Activated naive CD4-positive, alpha-beta T cell treated with anti-CD3 and anti-CD28 coated beads for 36 hours (primary cell): ENCODE measurements at regions of chr21 and their contacts with region 1.

Region 1: DNA sequence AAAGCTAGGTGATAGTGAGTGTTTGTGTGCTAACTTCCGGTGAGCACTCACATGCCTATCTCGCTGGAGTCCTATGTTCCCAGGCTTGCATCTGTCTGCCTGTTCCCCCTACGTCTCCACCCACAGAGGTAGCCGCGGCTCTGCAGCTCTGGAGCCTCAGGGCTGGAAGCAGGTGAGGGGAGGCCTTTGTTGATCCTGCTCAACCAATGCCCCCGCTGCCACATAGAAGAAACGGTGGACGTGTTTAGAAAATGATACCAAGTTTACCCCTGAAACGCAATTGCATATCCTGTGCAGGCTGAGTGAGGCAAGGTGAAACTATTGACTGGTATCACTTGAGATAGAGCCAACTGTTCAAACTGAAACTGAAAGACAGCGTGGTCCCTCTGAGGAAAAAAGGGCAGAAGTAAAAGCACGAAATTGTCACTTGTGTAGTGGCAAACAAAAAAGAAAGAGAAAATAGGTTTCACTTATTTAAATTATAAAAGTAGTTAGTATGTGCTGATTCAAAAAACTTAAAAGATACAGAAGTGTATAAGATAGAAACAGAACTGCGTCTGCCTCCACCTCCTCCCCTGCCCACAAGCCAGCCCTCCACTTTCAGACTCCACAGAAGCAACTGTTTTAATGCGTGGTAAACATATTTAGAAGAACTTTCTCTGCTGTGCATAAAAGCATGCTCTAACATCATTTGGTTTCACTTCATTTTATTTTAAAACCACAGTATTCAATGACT is 38.6 kb upstream of the ETS2 start:
- DNase-seq: peak; percentile 83
- H3K4me3 Mint-ChIP-seq: peak overlapping the region; percentile 51
- H3K27ac Mint-ChIP-seq: peak overlapping the region; percentile 82
- H3K4me1 Mint-ChIP-seq: peaks cover 42% of the 10 kb centered on the region
- H3K27me3 Mint-ChIP-seq: no peaks in the 10 kb centered on the region

Region 2: DNA sequence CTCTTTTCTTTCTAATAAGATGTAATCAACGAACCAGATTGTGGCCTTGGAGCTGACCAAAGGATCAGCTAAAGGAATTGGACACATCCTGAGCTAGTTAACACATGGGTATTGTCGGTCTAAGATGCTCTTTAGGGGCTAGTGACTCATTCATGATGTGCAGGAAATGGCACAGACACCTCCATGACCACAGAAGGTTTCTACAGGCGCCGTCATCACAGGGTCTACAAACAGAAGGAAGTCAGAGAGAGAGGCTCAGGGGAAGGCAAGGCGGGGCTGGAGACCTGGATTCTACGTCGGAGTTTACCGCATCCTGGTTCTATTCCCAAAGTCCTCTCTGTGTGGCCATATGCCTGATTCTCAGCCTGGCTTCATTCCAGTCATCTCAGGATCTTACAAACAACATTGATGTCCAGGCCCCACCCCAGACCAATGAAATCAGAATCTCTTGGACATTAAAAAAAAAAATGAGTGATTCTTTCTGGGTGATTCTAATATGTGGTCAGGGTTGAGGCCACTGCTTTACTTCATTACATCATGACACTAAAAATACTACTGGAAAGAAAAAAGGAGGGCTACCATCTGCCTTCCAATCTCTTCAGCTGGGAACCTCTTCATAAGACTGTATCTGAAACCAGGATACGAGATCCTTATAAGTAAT is 522.1 kb before region 1 on chr21:
- CTCF ChIA-PET with region 1: no interaction called
- intact Hi-C with region 1: loop called (anchors 2 kb)
- DNase-seq: peak; percentile 89
- H3K4me3 Mint-ChIP-seq: peak overlapping the region; percentile 10
- H3K27ac Mint-ChIP-seq: peak overlapping the region; percentile 87
- H3K4me1 Mint-ChIP-seq: peaks cover 41% of the 10 kb centered on the region
- H3K27me3 Mint-ChIP-seq: no peaks in the 10 kb centered on the region

Region 3: GRCh38 chr21:38780879-38781278 is 13.7 kb after region 1 on chr21:
- CTCF ChIA-PET with region 1: interaction called, 3 read pairs
- intact Hi-C with region 1: loop called (anchors 1 kb)
- DNase-seq: peak; percentile 33
- H3K4me3 Mint-ChIP-seq: no peak overlapping the region
- H3K27ac Mint-ChIP-seq: peak overlapping the region; percentile 39
- H3K4me1 Mint-ChIP-seq: peaks cover 27% of the 10 kb centered on the region
- H3K27me3 Mint-ChIP-seq: peaks cover 2% of the 10 kb centered on the region

Region 4: DNA sequence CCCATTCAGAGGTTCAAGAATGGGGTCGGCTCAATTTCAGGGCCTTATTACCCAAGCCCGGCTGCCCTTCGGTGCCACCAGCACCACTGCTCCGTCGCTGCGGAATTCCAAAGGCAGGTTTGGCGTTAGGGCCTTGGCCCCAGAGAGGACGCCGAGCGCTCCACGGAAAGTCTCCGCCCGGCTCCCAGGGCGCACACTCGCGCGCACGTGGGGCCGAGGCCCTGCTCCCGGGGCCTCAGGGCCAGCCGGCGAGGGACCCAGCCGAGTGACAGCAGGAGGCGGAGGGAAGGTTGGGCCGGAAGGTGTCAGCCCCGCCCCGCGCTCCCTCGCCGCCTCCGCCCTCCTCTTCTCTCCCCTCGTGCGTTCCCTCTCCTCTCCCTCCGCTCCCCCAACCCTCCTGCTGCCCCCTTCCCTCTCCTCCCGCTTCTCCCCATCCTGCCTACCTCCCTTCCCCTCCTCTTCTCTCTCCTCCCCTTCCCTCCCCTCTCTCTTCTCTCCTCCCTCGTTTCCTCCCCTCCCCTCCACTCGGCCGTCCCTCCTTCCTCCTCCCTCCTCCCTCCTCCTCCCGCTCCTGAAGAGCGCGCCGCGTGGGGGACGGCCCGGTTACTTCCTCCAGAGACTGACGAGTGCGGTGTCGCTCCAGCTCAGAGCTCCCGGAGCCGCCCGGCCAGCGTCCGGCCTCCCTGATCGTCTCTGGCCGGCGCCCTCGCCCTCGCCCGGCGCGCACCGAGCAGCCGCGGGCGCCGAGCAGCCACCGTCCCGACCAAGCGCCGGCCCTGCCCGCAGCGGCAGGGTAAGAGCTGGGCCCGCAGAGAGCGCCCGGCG is 38.4 kb after region 1 on chr21 and contains the start of gene ETS2:
- CTCF ChIA-PET with region 1: interaction called, 9 read pairs
- intact Hi-C with region 1: loop called (anchors 1 kb)
- DNase-seq: peak; percentile 84
- H3K4me3 Mint-ChIP-seq: peak within 1 kb of the TSS; percentile 90
- H3K27ac Mint-ChIP-seq: peak within 1 kb of the TSS; percentile 91
- H3K4me1 Mint-ChIP-seq: peaks cover 33% of the 10 kb centered on the region
- H3K27me3 Mint-ChIP-seq: no peaks in the 10 kb centered on the region
- total RNA-seq, gene ETS2: 22.4 to 25.6 TPM

Region 5: DNA sequence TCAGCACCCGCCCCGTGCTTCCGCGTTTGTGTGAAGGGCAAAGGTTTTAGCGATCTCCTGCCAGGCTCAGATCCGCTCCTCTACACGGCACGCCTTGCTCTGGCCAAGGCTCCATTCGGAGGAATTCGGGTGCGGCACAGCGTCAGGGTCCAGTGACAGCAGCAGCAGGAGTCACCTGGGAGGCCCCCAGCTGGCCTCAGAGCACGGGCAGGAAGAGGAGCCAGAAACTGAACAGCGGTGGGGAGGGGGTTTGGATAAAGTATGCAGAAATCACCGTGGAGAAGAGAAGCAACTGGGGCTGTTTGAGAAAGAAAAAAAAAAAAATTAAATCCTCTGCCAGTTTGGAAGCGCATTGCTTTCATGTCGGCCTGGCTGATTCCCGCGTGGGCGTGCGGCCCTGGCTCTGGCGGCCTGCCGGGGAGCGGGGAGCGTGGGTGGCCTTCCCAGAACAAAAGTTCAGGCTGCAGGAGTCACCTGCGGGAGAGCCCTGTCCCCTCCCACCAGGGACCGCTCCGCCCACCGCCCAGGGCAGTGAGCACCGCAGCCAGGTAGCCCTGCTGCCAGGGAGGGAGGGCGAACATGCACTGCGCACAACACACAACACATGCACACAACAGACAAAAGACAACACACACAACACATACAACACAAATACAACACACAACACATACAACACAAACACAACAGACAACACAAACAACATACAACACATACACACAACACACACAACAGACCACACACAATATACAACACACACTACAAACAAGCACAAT is 146.2 kb after region 1 on chr21:
- CTCF ChIA-PET with region 1: no interaction called
- intact Hi-C with region 1: loop called (anchors 5 kb)
- DNase-seq: peak; percentile 17
- H3K4me3 Mint-ChIP-seq: no peak overlapping the region
- H3K27ac Mint-ChIP-seq: no peak overlapping the region
- H3K4me1 Mint-ChIP-seq: peaks cover 7% of the 10 kb centered on the region
- H3K27me3 Mint-ChIP-seq: peaks cover 5% of the 10 kb centered on the region

Region 6: DNA sequence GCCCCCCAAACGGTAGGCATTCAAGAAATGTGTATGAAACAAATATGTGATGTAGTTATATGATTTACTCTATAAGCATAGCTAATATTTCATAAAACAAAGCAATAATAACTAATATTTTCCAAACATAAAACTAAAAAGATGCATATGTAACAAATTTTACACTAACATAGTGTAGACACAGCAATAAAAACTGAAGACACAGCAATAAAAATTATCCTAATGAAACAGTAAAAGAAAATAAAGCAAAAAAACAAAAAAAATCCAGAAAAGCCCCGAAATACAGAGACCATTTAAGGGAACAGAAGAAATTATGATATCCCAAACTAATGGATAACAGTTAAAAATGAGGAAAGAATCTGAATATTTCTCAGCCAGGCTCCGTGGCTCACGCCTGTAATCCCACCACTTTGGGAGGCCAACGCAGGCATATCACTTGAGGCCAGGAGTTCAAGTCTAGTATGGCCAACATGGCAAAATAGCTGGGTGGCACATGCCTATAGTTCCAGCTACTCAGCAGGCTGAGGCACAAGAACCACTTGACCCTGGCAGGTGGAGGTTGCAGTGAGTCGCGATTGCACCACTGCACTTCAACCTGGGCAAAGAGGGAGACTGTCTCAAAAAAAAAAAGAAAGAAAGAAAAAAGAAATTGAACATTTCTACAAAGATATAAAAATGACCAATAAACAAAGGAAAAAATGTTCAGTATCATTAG is 454.3 kb after region 1 on chr21:
- CTCF ChIA-PET with region 1: no interaction called
- intact Hi-C with region 1: no loop called
- DNase-seq: no peak
- H3K4me3 Mint-ChIP-seq: no peak overlapping the region
- H3K27ac Mint-ChIP-seq: no peak overlapping the region
- H3K4me1 Mint-ChIP-seq: peaks cover 12% of the 10 kb centered on the region
- H3K27me3 Mint-ChIP-seq: no peaks in the 10 kb centered on the region

Region 7: DNA sequence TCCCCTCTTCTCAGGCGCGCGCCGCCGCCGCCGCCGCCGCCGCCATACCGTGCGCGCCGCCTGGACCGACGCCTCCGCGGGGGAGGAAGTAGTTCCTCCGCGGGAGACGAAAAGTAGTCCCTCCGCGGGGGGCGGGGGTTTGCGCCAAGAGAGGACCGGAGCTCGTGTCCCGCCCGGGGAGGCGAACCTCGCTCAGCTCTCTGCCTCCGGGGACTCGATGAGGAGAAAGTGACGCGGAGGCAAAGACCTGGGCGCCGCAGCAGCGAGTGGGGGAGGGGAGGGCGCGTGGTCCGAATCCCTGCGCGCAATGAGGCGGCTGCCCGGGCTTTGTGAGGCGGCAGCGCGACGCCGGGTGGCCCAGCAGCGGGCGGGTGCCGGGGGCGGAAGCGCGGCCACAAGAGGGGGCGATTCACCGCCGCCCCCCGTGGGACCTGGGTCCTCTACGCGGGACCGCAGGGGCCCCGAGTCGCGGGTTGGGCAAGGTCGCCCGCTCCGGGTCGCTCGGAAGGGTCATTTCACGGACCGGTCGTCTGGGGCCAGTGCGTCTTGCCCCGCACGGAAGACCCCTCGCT is 546.5 kb after region 1 on chr21 and contains the start of gene BRWD1:
- CTCF ChIA-PET with region 1: no interaction called
- intact Hi-C with region 1: loop called (anchors 2 kb)
- DNase-seq: peak; percentile 75
- H3K4me3 Mint-ChIP-seq: peak within 1 kb of the TSS; percentile 93
- H3K27ac Mint-ChIP-seq: peak within 1 kb of the TSS; percentile 97
- H3K4me1 Mint-ChIP-seq: peaks cover 42% of the 10 kb centered on the region
- H3K27me3 Mint-ChIP-seq: no peaks in the 10 kb centered on the region
- total RNA-seq, gene BRWD1: 23.0 to 24.5 TPM

Region 8: DNA sequence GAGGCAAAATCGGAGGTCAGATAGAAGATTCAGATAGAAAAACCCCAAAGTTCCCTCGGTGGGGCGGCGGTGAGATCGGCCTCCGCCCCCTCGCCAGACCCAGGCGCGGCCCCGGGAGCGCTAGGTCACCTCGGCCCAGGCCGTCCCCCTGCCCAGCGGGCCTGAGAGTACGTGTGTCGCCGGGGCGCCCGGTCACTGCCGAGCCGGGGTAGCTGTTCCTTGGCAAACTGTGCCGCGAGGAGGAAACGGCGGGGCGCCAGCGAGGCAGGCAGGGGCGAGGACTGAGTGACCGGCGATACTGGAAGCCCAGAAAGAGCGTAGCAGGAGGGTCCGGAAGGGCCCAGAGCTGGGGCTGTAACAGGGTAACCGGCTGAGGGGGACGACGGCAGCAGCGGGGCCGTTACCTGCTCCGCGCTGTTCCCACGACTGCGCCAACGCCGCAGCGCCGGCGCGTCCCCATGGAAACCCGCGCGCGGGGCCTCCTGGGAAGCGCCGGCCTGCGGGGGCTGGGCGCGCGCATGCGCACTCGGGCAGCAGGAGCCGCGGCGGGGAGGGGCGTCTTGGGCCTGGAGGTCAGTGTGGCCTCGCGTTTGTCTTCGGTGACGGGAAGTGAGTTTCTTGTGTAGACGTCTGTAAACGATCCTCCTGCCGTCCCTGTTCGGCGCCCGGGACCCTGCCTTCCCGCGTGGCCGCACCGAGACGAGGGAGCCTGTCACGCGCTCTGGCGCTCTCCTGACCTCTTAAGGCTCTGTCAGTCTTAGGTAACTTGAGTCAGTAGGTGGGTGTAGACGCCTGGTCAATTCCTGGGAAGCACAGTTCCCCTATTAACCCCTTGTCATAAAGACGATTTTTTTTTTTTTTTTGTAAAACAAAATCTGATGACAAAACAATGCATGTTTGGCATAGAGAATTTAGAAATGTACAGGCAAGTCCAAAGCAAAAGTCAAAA is 678.4 kb after region 1 on chr21 and contains the start of gene LCA5L:
- CTCF ChIA-PET with region 1: no interaction called
- intact Hi-C with region 1: loop called (anchors 10 kb)
- DNase-seq: peak; percentile 86
- H3K4me3 Mint-ChIP-seq: peak within 1 kb of the TSS; percentile 95
- H3K27ac Mint-ChIP-seq: peak within 1 kb of the TSS; percentile 94
- H3K4me1 Mint-ChIP-seq: peaks cover 23% of the 10 kb centered on the region
- H3K27me3 Mint-ChIP-seq: peaks cover 9% of the 10 kb centered on the region
- total RNA-seq, gene LCA5L: 0.26 TPM in 1 of 2 experiments, not detected in the other